ENCODE measurements at regions of chr6 and their contacts with region 1.

Region 1: DNA sequence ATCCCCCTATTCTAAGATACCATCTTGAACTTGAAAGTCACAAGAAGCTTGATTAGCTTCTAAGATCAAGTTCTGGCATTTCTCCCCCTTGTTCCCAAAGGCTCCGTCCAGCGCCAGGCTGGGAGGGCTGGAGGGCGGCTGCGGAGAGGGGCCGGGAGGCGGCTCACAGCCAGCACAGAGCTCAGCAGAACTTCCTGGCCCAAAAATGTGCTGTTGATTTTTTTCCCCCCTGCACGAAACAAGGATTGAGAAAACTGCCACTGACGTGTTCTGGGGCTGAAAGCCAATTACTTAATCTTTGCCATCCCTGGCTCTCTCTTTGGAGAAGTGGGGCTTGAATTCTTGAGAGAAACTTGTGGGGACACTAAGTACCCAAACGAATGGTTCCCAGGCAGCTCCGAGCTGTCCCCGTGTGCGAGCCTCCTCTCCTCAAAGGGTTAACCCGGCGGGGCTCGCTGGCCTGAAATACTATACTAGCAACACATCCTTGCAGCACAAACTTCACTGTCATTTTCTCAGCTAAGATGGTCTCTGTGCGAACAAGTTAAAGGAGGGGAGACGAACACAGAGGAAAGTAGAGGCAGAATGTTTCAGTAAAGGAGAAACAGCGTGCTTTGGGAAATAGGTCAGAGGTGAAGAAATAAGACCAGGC is 452 bp downstream of the TRAF3IP2 start:
- DNase-seq: peak; percentile 73 to 79
- ATAC-seq: peak; percentile 53 to 73 (median 67)
- H3K4me3 ChIP-seq: peak overlapping the region; percentile 47 to 74 (median 61)
- H3K27ac ChIP-seq: peak overlapping the region; percentile 89 to 97 (median 94)
- H3K4me1 ChIP-seq: peaks cover 14 to 68% (median 55%) of the 10 kb centered on the region in 9 donors
- H3K27me3 ChIP-seq: no peaks in the 10 kb centered on the region
- CTCF ChIP-seq: no peak

Region 2: GRCh38 chr6:111565326-111566221 is 39.7 kb before region 1 on chr6:
- intact Hi-C with region 1: loop called in 5 of 10 experiments (anchors 2 to 5 kb)
- DNase-seq: no peak
- ATAC-seq: no peak
- H3K4me3 ChIP-seq: no peak overlapping the region
- H3K27ac ChIP-seq: peak overlapping the region in 9 of 10 donors; percentile 14 to 86 (median 37)
- H3K4me1 ChIP-seq: peaks cover 19 to 70% (median 57%) of the 10 kb centered on the region in 9 donors
- H3K27me3 ChIP-seq: no peaks in the 10 kb centered on the region
- CTCF ChIP-seq: no peak

Region 3: GRCh38 chr6:111642463-111643158 is 37.4 kb after region 1 on chr6:
- intact Hi-C with region 1: loop called in 2 of 10 experiments (anchors 1 to 2 kb)
- DNase-seq: peak; percentile 52 to 78
- ATAC-seq: peak; percentile 83 to 95 (median 92)
- H3K4me3 ChIP-seq: no peak overlapping the region
- H3K27ac ChIP-seq: no peak overlapping the region
- H3K4me1 ChIP-seq: peaks cover 0 to 14% (median 0%) of the 10 kb centered on the region in 9 donors
- H3K27me3 ChIP-seq: no peaks in the 10 kb centered on the region
- CTCF ChIP-seq: peak; percentile 43 to 81 (median 64)

Region 4: GRCh38 chr6:111683749-111684267 is 78.6 kb after region 1 on chr6:
- intact Hi-C with region 1: loop called in 1 of 10 experiments (anchors 5 kb)
- DNase-seq: peak in 1 of 2 donors; percentile 56
- ATAC-seq: peak; percentile 36 to 81 (median 70)
- H3K4me3 ChIP-seq: no peak overlapping the region
- H3K27ac ChIP-seq: peak overlapping the region; percentile 81 to 92 (median 86)
- H3K4me1 ChIP-seq: peaks cover 9 to 88% (median 62%) of the 10 kb centered on the region in 9 donors
- H3K27me3 ChIP-seq: no peaks in the 10 kb centered on the region
- CTCF ChIP-seq: no peak